CD14-positive monocyte (primary cell): ENCODE measurements at regions of chr20 and their contacts with region 1.

Region 1: DNA sequence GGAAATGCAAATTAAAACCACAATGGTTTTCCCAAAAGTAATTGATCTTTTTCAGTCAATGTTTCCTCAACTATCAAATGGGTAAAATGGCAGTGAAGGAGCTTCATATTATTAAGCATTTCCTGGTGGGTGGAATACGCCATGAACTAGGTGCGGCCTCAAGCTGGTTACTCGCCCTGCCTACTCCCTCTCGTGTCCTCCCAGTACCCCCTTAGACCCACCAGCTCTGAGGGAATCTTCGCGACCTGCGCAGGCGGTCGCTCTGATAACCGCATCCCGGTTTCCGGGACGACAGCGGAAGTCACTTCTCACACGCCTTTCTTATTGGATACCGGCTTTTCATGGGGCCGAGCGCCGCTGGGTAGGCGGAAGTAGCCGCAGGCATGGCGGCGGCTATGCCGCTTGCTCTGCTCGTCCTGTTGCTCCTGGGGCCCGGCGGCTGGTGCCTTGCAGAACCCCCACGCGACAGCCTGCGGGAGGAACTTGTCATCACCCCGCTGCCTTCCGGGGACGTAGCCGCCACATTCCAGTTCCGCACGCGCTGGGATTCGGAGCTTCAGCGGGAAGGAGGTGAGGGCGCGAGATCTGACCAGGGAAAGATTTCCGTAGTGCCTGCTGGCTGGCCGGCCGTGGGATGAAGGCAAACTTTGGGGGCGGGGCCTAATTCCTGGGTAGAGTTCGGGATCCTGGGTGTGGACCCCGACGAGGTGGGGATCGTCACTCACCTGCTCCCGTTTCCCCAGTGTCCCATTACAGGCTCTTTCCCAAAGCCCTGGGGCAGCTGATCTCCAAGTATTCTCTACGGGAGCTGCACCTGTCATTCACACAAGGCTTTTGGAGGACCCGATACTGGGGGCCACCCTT is at the start of gene PIGT:
- DNase-seq: peak; percentile 72 to 92 (median 86)
- H3K4me3 ChIP-seq: peak within 1 kb of the TSS; percentile 68 to 91 (median 71)
- H3K4me3 Mint-ChIP-seq: peak within 1 kb of the TSS; percentile 96
- H3K27ac ChIP-seq: peak within 1 kb of the TSS; percentile 45 to 85
- H3K27ac Mint-ChIP-seq: peak within 1 kb of the TSS; percentile 91 to 98 (median 96)
- H3K4me1 ChIP-seq: peaks cover 10 to 22% of the 10 kb centered on the region in 2 donors
- H3K4me1 Mint-ChIP-seq: peaks cover 14% of the 10 kb centered on the region
- H3K27me3 ChIP-seq: no peaks in the 10 kb centered on the region
- H3K27me3 Mint-ChIP-seq: peaks cover 0 to 2% (median 0%) of the 10 kb centered on the region in 3 donors
- CTCF ChIP-seq: no peak
- polyA plus RNA-seq, gene PIGT: 49.2 to 87.6 (median 59.7) TPM

Region 2: GRCh38 chr20:45322952-45323383 is 93.0 kb before region 1 on chr20:
- intact Hi-C with region 1: no loop called
- DNase-seq: peak; percentile 65 to 82 (median 76)
- H3K4me3 ChIP-seq: no peak overlapping the region
- H3K4me3 Mint-ChIP-seq: no peak overlapping the region
- H3K27ac ChIP-seq: no peak overlapping the region
- H3K27ac Mint-ChIP-seq: no peak overlapping the region
- H3K4me1 ChIP-seq: peaks cover 20 to 21% of the 10 kb centered on the region in 2 donors
- H3K4me1 Mint-ChIP-seq: peaks cover 24% of the 10 kb centered on the region
- H3K27me3 ChIP-seq: no peaks in the 10 kb centered on the region
- H3K27me3 Mint-ChIP-seq: peaks cover 0 to 3% (median 1%) of the 10 kb centered on the region in 3 donors
- CTCF ChIP-seq: peak; percentile 48

Region 3: DNA sequence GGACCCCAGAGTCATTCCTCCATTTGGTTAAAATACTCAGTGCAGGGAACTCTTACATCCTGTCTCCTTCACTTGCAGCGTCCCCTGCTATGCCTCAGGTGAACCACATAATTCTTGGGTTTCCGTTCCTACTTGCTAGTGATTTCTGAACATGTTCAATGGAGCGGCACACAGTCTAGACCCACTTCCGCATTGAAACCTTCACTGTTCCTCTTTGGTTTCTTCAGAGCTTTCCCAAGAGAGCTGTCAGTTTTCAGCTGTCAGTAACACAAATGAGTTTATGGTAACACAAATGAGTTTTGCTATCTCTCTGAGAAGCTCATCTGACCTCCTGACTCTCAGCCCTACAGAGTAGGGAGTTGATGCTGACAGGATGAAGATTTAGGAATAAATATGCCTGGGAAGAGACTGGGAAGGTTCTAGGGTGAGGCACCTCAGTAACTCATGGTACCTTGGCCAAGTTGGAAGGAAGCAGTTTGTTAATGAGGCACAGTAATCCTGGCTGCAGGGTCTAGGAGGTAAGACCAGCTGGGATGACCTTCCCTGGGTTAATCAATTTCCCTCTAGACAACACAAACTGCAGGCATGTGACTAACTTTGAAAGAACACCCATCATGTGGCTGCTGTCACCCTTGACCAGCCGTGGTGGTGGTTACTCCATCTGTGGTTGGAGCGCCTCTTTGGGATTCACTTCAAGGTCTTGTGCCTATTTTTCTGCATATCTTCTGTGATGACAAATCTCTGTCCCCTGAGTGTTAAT is 47.6 kb before region 1 on chr20:
- intact Hi-C with region 1: loop called in 1 of 2 experiments (anchors 5 kb)
- DNase-seq: peak; percentile 66 to 90 (median 74)
- H3K4me3 ChIP-seq: peak overlapping the region in 1 of 3 experiments; percentile 38
- H3K4me3 Mint-ChIP-seq: peak overlapping the region in 1 of 2 donors; percentile 73
- H3K27ac ChIP-seq: peak overlapping the region in 1 of 2 donors; percentile 80
- H3K27ac Mint-ChIP-seq: peak overlapping the region; percentile 85 to 93 (median 91)
- H3K4me1 ChIP-seq: peaks cover 39 to 52% of the 10 kb centered on the region in 2 donors
- H3K4me1 Mint-ChIP-seq: peaks cover 52% of the 10 kb centered on the region
- H3K27me3 ChIP-seq: peaks cover 0 to 3% of the 10 kb centered on the region in 2 donors
- H3K27me3 Mint-ChIP-seq: peaks cover 2 to 11% (median 9%) of the 10 kb centered on the region in 3 donors
- CTCF ChIP-seq: no peak

Region 4: DNA sequence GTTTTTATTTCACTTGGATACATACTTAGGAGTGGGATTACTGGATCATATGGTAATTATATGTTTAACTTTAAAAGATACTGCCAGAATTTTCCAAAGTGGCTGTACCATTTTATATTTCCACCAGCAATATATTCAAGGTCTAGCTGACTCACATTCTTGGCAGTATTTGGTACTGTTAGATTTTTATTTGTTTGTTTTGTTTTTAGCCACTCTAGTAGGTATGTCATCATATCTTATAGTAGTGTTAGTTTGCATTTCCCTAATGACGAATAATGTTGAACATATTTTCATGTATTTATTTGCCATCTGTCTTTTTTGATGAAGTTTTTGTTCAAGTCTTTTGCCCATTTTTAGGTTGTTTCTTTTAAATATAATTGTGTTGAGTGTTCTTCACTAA is 32.9 kb before region 1 on chr20:
- intact Hi-C with region 1: no loop called
- DNase-seq: no peak
- H3K4me3 ChIP-seq: no peak overlapping the region
- H3K4me3 Mint-ChIP-seq: no peak overlapping the region
- H3K27ac ChIP-seq: no peak overlapping the region
- H3K27ac Mint-ChIP-seq: no peak overlapping the region
- H3K4me1 ChIP-seq: no peaks in the 10 kb centered on the region
- H3K4me1 Mint-ChIP-seq: peaks cover 2% of the 10 kb centered on the region
- H3K27me3 ChIP-seq: no peaks in the 10 kb centered on the region
- H3K27me3 Mint-ChIP-seq: peaks cover 0 to 8% (median 0%) of the 10 kb centered on the region in 3 donors
- CTCF ChIP-seq: no peak

Region 5: GRCh38 chr20:45581702-45582101 is 165.7 kb after region 1 on chr20:
- intact Hi-C with region 1: no loop called
- DNase-seq: no peak
- H3K4me3 ChIP-seq: no peak overlapping the region
- H3K4me3 Mint-ChIP-seq: no peak overlapping the region
- H3K27ac ChIP-seq: no peak overlapping the region
- H3K27ac Mint-ChIP-seq: no peak overlapping the region
- H3K4me1 ChIP-seq: no peaks in the 10 kb centered on the region
- H3K4me1 Mint-ChIP-seq: no peaks in the 10 kb centered on the region
- H3K27me3 ChIP-seq: peaks cover 0 to 4% of the 10 kb centered on the region in 2 donors
- H3K27me3 Mint-ChIP-seq: peaks cover 12 to 16% (median 15%) of the 10 kb centered on the region in 3 donors
- CTCF ChIP-seq: no peak